Activated CD4-positive, alpha-beta T cell treated with anti-CD3 and anti-CD28 coated beads, Interleukin-2, amount 10 ng/mL, durations not matched to agents 24 days and 14 days (primary cell): ENCODE measurements at regions of chr18 and their contacts with region 1.

Region 1: GRCh38 chr18:77061946-77062517 is 70.6 kb downstream of the MBP start:
- DNase-seq: peak; percentile 83
- H3K4me3 Mint-ChIP-seq: peak overlapping the region; percentile 67
- H3K27ac Mint-ChIP-seq: peak overlapping the region; percentile 97
- H3K4me1 Mint-ChIP-seq: peaks cover 81% of the 10 kb centered on the region
- H3K27me3 Mint-ChIP-seq: no peaks in the 10 kb centered on the region

Region 2: DNA sequence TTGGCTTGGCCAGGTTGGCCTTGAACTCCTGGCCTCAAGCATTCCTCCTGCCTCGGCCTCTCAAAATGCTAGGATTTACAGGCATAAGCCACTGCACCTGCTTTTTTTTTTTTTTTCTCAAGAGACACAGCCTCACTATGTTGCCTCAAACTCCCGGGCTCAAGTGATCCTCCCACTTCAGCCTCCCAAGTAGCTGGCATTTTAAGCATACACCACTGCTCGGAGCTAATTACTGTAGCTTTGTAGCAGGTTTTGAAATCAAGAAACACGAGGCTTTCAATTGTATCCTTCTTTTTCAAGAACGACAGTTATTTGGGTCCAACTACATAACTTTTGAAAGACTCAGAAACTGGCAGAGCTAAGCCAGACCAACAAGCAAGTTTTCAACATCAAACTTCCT is 249.8 kb before region 1 on chr18:
- intact Hi-C with region 1: no loop called
- DNase-seq: no peak
- H3K4me3 Mint-ChIP-seq: no peak overlapping the region
- H3K27ac Mint-ChIP-seq: no peak overlapping the region
- H3K4me1 Mint-ChIP-seq: peaks cover 2% of the 10 kb centered on the region
- H3K27me3 Mint-ChIP-seq: no peaks in the 10 kb centered on the region

Region 3: GRCh38 chr18:76822510-76823160 is 239.4 kb before region 1 on chr18 and contains the start of gene ZNF236:
- intact Hi-C with region 1: loop called (anchors 5 kb)
- DNase-seq: peak; percentile 90
- H3K4me3 Mint-ChIP-seq: peak within 1 kb of the TSS; percentile 95
- H3K27ac Mint-ChIP-seq: peak within 1 kb of the TSS; percentile 95
- H3K4me1 Mint-ChIP-seq: peaks cover 43% of the 10 kb centered on the region
- H3K27me3 Mint-ChIP-seq: no peaks in the 10 kb centered on the region
- total RNA-seq, gene ZNF236: 17.5 and 22.0 TPM in 2 replicates

Region 4: DNA sequence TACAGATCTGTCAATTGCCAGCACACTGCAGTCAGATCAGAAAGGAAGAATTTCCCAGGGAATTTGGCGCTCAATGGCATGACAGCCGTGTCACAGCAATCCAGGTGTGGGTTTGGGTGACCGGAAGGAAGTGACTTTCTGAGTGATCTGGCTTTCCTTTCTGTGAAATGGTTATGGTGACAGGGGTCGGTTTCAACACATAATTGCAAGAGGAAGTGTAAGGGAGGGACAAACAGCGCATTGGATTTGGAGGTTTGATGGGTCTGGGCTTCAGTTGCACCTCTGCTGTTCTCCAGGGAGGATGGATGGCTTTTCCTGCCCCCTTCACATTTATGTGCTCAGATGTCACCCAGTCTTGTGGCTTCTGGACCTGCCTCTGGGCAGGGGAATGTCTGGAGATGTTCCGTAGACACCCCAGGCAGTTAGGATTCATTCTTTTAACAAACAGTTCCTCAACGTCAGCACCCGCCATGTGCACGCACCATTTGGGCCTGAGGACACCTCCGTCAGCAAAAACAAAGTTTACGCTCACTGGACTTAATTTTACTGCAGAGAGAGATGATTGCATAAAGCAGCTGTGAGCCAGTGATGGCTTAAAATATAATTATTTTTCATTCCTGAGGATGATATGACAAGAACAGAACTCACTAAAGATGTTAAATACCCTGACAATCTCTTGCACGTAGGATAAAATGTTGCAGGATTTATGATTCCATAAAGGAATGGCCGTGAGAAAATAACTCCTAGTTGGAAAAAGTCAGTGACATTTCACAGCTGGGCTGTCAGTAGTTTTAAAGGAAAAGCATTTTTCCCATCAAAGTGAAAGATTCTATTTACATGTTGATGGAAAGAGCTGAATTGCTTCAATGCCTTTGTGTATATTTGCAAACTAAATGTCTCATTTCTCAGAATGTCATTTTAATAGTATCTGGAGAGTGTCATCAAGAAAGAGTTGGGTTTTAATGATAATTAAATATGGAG is 33.6 kb after region 1 on chr18:
- intact Hi-C with region 1: no loop called
- DNase-seq: no peak
- H3K4me3 Mint-ChIP-seq: peak overlapping the region; percentile 30
- H3K27ac Mint-ChIP-seq: peak overlapping the region; percentile 79
- H3K4me1 Mint-ChIP-seq: peaks cover 70% of the 10 kb centered on the region
- H3K27me3 Mint-ChIP-seq: no peaks in the 10 kb centered on the region

Region 5: DNA sequence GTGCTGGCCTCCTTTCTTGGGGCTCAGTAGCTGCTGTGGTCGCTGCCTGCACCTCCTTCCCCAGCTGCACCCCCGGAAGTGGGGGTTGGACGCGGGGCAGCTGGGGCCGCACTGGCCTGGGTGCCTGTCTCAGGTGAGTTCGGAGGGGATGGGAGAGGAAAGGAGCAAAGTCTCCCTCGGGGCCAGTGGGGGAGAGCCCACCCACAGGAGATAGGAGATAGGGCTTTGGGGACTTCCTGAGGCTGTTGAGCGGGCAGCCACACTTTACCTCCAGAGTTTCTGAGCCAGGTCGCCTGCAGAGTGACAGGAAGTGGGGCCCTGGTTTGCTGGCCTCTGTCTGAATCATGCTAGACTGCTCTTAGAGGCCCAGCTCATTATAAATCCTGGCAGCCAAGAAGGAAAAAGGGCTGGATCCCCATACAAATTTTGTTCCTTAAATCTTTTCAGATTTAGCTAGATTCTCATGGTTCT is 62.5 kb after region 1 on chr18:
- intact Hi-C with region 1: loop called (anchors 2 kb)
- DNase-seq: peak; percentile 87
- H3K4me3 Mint-ChIP-seq: peak overlapping the region; percentile 81
- H3K27ac Mint-ChIP-seq: peak overlapping the region; percentile 89
- H3K4me1 Mint-ChIP-seq: peaks cover 78% of the 10 kb centered on the region
- H3K27me3 Mint-ChIP-seq: no peaks in the 10 kb centered on the region

Region 6: GRCh38 chr18:77223653-77224052 is 161.6 kb after region 1 on chr18:
- intact Hi-C with region 1: loop called (anchors 1 kb)
- DNase-seq: no peak
- H3K4me3 Mint-ChIP-seq: no peak overlapping the region
- H3K27ac Mint-ChIP-seq: peak overlapping the region; percentile 51
- H3K4me1 Mint-ChIP-seq: peaks cover 6% of the 10 kb centered on the region
- H3K27me3 Mint-ChIP-seq: peaks cover 19% of the 10 kb centered on the region